ENCODE measurements at regions of chr1 and their contacts with region 1.

Region 1: DNA sequence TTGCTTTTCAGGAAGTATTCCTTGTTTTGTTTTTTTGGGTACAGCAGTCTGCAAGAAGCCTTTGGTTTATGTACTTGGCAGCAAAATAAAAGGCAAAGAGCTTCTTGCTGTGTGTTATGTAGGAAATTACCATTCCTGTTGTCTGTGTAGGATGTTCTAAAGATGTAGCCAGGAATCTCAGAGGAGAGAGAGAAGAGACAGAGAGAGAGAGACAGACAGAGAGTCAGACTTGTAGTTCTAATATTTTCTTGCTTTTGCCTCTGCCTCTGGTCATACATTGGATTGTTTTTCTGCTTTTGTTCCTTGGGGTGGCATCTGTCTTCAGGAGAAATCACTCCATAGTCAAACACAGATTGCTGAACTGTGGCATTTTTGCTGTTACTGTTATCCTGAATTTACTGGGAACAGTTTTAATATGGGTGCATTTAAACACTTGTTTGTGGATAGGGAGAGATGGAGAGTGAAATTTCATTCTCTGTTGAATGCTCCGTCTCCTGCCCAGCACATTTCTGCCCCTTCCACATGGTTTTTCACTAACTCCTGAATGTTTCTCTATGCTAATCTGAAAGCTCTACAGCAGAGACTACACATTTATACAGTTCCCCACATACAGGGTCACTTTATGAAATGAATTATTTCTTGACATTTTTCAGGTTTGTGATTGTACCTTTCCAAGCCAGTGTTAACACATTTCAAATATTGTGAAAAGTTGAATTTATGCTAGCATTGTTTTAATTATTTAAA is 49.8 kb downstream of the POU2F1 start:
- DNase-seq: no peak
- CTCF ChIP-seq: no peak

Region 2: DNA sequence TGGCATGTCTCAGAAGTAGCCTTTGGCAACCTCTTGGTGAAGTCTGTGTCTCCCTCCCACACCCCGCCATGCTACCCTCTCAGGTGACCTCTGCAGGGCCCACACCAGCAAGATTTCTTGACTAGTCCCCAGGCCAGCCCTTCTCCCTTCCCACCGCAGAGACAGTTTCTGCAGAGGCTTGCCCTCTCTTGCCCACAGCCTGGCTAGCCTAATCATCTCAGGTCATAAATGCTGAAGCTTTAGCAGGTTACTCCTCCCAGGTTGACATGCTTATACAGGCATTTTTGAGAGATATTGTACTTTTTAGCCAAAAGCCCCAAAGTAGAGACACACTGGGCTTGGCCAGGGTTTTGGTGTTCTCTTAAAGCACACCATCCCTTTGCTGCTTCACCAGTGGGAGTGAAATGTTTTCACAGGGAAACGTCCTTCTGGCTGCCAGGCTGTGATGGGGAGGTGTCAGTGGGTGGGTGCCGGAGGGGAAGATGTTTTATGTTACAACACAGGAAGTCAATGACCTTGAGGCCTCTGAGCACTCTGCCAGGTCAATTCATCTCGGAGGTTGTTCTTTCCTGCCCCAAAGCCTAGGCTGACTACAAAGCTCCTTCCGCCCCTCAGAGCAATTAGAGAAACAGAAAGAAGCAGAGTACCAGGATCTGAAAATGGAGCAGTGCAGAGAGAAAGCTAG is 118.2 kb before region 1 on chr1:
- CTCF ChIA-PET with region 1: no interaction called
- POLR2A ChIA-PET with region 1: no interaction called
- DNase-seq: no peak
- CTCF ChIP-seq: no peak

Region 3: DNA sequence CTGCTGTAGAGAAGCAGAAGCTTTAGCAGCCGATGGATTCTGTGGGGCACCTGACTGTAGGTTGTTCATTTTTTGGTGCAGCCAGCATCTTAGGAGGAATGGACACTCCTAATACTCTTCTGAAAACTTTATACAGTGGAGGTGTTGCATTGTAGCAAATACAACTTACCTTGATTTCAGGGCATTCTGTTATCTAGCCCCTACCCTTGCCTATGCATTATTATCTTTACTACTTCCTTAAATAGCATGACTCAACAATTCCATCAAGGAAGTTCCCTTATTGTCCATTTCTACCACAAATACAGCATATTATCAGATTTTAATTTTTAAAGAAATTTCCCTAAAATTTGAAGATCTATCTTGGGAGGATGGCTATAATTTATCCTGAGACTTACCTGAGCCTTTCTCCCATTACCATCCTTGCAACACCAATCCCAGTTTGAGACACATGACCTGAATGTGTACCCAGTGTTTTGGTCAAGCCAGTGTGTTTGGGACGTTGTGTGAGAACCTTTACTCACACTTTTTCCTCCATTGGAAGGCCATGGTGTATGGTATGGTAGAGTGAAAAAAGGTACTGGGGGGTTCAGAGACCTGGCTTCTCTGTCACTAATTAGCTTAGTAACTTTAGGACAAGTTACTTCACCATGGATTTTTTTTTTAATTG is 40.7 kb before region 1 on chr1:
- CTCF ChIA-PET with region 1: interaction called, 13 read pairs
- POLR2A ChIA-PET with region 1: no interaction called
- DNase-seq: no peak
- CTCF ChIP-seq: no peak

Region 4: GRCh38 chr1:167291539-167292185 is 21.1 kb after region 1 on chr1:
- CTCF ChIA-PET with region 1: interaction called, 13 read pairs
- POLR2A ChIA-PET with region 1: no interaction called
- DNase-seq: no peak
- CTCF ChIP-seq: no peak

Region 5: GRCh38 chr1:167357305-167357704 is 86.8 kb after region 1 on chr1:
- CTCF ChIA-PET with region 1: interaction called, 11 read pairs
- POLR2A ChIA-PET with region 1: no interaction called
- DNase-seq: no peak
- CTCF ChIP-seq: no peak

Region 6: DNA sequence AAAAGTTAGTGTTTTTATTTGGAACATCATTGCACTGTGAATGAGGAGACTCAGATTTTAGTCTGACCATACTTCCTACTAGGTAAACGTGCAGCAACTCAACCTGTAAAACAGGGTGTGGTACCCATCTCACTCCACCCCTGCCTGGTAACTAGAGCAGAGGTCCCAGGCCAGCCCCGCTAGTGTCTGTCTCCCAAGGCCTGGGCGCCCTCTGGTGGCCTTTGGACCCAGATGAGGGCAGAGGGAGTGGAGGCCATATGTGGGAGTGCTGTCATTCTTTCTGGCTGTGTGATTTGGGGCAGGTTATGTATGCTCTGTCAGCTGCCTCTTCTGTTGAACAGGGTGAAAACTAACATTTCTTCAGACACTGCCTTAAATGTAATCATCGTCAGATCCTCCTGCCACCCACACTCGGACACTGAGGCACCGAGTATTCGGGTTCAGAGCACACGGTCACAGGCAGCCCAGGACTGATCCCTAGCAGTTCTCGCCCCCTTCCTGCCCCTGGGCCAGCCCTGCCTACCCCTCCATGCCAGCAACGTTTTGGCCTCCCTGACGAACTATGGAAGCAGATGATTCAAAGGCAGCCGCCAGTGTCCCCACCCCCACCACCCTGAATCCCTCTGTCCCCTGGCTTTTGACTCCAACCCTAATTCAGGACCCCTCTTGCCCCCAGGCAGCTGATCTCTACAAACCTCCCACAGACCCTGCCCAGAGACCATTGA is 171.8 kb after region 1 on chr1:
- CTCF ChIA-PET with region 1: interaction called, 75 read pairs
- POLR2A ChIA-PET with region 1: no interaction called
- DNase-seq: peak; percentile 89
- CTCF ChIP-seq: peak; percentile 95

Region 7: DNA sequence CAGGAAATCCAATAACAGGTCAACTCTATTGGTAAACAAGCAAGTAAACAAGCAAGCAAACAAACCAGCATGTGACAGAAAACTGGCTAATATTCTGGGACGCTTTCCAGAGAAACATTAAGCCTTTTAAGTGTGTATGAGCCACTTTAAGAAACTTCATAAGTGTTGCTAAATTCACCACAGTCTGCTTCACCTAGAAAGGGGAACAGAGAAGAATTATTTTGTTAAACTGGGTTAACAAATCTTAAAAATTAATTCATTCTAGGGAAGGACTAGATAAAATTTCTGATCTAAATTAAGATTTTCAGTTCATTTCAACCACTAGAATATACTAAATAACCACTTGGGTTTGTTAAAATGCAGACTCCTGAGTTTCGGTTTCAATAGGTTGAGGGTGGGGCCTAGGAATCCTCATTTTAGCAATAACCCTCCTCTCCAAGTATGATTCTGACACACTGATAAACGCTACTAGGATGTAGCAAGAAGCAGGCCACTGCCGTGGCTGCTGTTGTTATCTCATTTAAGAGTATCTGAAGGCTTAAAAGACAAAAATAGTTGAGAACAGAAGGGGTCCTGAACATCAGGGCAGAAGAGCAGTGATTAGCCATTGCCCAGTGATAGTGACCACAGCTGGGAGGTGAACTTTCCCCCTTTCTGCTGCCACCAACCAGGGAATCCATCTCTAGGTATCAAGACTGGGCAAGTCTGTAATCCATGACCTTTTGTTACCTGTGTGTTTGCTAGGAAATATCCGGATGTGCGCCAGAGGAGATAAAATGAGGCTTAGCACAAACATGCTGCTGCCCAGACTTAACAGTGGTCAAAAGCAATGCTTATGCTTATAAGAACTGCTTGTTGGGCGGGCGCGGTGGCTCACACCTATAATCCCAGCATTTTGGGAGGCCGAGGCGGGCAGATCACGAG is 271.9 kb after region 1 on chr1:
- CTCF ChIA-PET with region 1: interaction called, 20 read pairs
- POLR2A ChIA-PET with region 1: no interaction called
- DNase-seq: no peak
- CTCF ChIP-seq: no peak

Measured in GM10248 (cell line).